HEK293T (cell line): ENCODE measurements at regions of chr1 and their contacts with region 1.

Region 1: DNA sequence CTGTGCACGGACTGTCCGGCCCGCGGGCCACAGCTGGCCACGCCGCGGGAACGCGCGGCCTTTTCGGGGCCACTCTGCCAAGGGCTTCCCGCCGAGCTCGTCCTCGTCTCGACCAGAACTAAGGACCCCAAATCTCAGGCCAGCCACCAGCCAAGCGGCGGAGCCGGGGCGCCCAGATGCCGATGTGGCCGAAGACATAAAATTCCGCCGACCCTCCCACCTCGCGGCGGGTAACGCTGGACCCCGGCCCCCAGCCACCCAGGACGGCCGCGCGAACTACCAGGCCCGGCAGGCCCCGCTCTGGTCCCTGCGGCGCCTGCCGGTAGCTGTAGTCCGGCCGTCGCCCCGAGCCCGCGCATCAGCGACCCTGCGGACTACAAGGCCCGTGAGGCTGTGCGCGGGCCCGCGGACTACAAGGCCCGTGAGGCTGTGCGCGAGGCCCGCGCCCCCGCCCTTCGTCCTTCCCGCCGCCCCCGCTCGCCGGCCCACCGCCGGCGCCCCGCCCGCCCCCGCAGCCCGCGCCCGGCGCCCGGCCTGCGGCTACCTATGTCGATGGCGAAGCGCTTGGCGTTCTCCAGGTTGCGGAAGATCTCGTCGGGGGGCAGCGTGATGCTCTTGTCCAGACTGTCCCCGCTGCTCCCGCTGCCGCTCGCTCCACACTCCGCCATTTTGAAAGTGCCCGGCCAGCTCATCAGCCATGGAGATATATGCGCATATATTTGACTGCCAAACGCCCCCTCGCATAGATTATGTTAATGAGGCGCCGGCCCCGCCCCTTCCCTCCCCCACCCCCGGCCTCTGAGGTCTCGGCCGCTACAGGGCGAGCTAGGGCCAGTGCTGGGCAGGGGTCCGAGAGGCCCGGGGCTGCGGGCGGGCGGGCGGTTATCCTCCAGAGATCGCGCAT is at the start of gene PANK4:
- DNase-seq: peak; percentile 91

Region 2: DNA sequence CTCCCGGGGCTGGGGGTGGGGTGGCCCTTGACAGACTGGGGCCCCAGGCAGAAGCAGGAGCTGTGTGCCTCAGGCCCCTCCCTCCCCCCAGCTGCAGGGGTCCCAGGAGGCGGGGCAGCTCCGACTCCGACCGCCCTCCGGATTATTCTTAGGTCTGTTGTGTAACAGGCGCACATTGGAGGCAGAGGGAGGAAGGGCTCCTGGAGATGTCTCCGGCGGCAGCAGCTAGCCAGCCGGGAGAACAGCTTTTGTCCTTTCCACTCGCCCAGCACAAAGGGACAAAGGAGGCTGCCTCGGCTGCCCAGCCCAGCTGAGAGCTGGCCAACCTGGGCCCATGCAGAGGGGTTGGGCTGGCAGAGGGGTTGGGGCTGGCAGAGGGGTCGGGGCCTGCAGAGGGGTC is 79.8 kb before region 1 on chr1:
- CTCF ChIA-PET with region 1: no interaction called
- POLR2A ChIA-PET with region 1: interaction called, 11 read pairs
- DNase-seq: no peak